Activated CD4-positive, alpha-beta T cell treated with anti-CD3 and anti-CD28 coated beads for 36 hours (primary cell): ENCODE measurements at regions of chr2 and their contacts with region 1.

Region 1: GRCh38 chr2:10302479-10303180 is at the start of gene HPCAL1:
- DNase-seq: peak; percentile 91
- ATAC-seq: peak; percentile 72
- H3K4me3 Mint-ChIP-seq: peak within 1 kb of the TSS; percentile 100
- H3K27ac Mint-ChIP-seq: peak within 1 kb of the TSS; percentile 89
- H3K4me1 Mint-ChIP-seq: peaks cover 65% of the 10 kb centered on the region
- H3K27me3 Mint-ChIP-seq: no peaks in the 10 kb centered on the region
- total RNA-seq, gene HPCAL1: 109 to 114 TPM

Region 2: DNA sequence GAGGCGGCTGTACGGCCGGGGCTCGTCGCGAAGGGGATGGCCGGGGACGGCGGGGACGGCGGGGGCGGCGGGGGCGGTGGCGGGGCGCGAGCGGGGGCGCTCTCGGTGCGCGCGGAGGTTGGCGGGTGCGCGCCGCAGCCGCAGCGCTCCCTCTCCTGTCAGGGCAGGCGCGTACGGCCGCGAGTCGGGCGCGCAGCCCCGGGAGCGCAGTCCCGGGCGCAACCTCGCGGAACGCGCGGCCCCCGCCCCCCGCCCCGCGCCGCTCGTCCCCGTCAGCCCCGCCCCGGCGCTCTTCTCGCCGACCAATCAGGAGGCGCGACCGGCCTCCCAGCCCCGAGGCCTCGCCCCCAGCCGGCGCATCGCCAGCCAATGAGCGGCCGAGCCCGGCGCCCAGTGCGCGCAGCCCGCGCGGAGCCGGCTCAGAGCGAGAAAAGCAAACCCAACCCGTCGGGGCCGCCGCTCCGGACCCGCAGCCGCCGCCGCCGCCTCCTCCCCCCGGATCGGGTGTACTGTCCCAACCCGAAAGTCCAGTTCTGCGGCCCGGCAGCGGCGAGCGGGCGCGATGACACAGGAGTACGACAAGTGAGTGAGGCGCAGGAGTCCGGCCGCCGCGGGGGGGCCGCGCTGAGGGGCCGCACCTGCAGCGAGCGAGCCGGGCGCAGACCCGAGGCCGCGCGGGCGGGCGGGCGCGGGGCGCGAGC is 351.2 kb before region 1 on chr2 and contains the start of gene GRHL1:
- CTCF ChIA-PET with region 1: no interaction called
- POLR2A ChIA-PET with region 1: no interaction called
- intact Hi-C with region 1: loop called in 1 of 2 experiments (anchors 5 kb)
- DNase-seq: peak; percentile 95
- ATAC-seq: peak; percentile 98
- H3K4me3 Mint-ChIP-seq: peak within 1 kb of the TSS; percentile 68
- H3K27ac Mint-ChIP-seq: no peak within 1 kb of the TSS
- H3K4me1 Mint-ChIP-seq: peaks cover 4% of the 10 kb centered on the region
- H3K27me3 Mint-ChIP-seq: peaks cover 39% of the 10 kb centered on the region
- total RNA-seq, gene GRHL1: 0.27 to 0.53 TPM

Region 3: DNA sequence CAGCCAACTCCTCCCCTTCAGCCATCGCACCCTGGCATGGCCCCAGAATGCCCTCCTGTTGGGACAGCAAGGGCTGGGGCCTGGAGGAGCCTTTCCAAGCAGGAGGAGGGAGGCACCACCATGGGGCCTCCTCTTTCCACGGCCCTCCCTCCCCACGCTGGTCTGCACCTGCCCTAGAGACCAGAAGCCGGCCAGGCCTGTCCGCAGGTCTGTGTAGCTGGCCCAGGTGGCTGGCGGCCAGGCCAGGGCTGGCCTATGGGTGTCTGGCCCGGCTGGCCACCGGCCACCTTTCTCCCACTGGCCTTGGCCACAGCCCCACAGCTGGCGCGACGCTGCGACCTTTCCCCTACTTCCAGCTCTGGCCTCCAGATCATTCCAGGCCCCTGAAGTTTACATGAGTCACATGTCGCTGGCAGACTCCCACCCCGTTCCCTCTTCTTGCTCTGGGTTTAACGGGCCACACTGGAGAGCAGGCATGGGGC is 292.8 kb before region 1 on chr2:
- CTCF ChIA-PET with region 1: no interaction called
- POLR2A ChIA-PET with region 1: no interaction called
- intact Hi-C with region 1: no loop called
- DNase-seq: no peak
- ATAC-seq: no peak
- H3K4me3 Mint-ChIP-seq: no peak overlapping the region
- H3K27ac Mint-ChIP-seq: no peak overlapping the region
- H3K4me1 Mint-ChIP-seq: no peaks in the 10 kb centered on the region
- H3K27me3 Mint-ChIP-seq: peaks cover 9% of the 10 kb centered on the region

Region 4: GRCh38 chr2:10028988-10029874 is 273.4 kb before region 1 on chr2:
- CTCF ChIA-PET with region 1: no interaction called
- POLR2A ChIA-PET with region 1: no interaction called
- intact Hi-C with region 1: no loop called
- DNase-seq: peak; percentile 41
- ATAC-seq: peak; percentile 78
- H3K4me3 Mint-ChIP-seq: no peak overlapping the region
- H3K27ac Mint-ChIP-seq: no peak overlapping the region
- H3K4me1 Mint-ChIP-seq: peaks cover 14% of the 10 kb centered on the region
- H3K27me3 Mint-ChIP-seq: no peaks in the 10 kb centered on the region

Region 5: GRCh38 chr2:10382354-10383061 is 79.9 kb after region 1 on chr2:
- CTCF ChIA-PET with region 1: interaction called, 3 read pairs
- POLR2A ChIA-PET with region 1: interaction called, 5 read pairs
- intact Hi-C with region 1: loop called in 1 of 2 experiments (anchors 5 kb)
- DNase-seq: peak; percentile 46
- ATAC-seq: peak; percentile 68
- H3K4me3 Mint-ChIP-seq: peak overlapping the region; percentile 15
- H3K27ac Mint-ChIP-seq: peak overlapping the region; percentile 69
- H3K4me1 Mint-ChIP-seq: peaks cover 91% of the 10 kb centered on the region
- H3K27me3 Mint-ChIP-seq: no peaks in the 10 kb centered on the region

Region 6: GRCh38 chr2:10424051-10424450 is 121.4 kb after region 1 on chr2:
- CTCF ChIA-PET with region 1: no interaction called
- POLR2A ChIA-PET with region 1: no interaction called
- intact Hi-C with region 1: no loop called
- DNase-seq: no peak
- ATAC-seq: no peak
- H3K4me3 Mint-ChIP-seq: no peak overlapping the region
- H3K27ac Mint-ChIP-seq: no peak overlapping the region
- H3K4me1 Mint-ChIP-seq: no peaks in the 10 kb centered on the region
- H3K27me3 Mint-ChIP-seq: no peaks in the 10 kb centered on the region

Region 7: DNA sequence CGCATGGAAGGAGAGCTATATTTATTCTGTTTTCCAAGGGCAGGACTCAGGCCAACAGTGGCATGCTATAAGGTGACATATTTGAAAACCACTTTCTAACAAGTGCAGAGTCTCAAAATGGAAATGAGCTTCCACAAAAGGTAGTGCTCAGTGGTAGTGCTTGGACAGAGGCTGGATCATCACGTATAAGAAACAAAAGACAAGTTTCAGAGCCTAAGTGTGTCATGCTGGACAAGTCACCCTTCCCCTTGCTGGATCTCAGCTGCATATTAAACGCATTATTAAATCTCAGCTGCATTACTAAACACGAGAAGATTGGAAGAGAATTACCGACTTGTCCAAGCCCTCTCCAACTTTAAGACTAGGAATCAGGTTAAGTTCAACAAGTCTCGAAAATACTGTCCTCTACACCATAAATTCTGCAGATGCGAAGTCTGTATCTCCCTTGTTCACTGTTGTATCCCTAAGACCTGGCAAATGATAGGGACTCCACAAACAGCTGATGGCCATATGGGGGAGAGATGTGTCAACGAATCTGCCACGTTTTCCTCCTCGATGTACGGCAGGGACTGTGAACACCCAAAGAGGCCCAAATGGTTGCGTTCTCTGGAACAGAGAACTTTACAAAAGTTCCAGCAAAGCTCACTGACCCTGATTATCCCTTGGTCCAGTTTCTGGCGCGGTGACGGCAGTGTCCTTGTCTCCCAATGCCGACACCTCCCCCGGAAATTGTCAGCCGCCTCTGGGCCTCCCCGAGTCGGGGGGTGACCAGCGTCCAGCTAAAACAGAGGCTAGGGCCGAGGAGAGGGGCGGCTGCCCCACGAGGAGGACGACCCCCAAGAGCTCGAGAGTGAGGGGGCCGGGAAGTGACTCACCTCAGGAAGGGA is 386.5 kb after region 1 on chr2:
- CTCF ChIA-PET with region 1: no interaction called
- POLR2A ChIA-PET with region 1: no interaction called
- intact Hi-C with region 1: loop called in 1 of 2 experiments (anchors 10 kb)
- DNase-seq: no peak
- ATAC-seq: peak; percentile 19
- H3K4me3 Mint-ChIP-seq: no peak overlapping the region
- H3K27ac Mint-ChIP-seq: no peak overlapping the region
- H3K4me1 Mint-ChIP-seq: peaks cover 7% of the 10 kb centered on the region
- H3K27me3 Mint-ChIP-seq: no peaks in the 10 kb centered on the region

Region 8: GRCh38 chr2:11154923-11155380 is 852.3 kb after region 1 on chr2:
- CTCF ChIA-PET with region 1: no interaction called
- POLR2A ChIA-PET with region 1: no interaction called
- intact Hi-C with region 1: loop called in 1 of 2 experiments (anchors 5 kb)
- DNase-seq: peak; percentile 100
- ATAC-seq: peak; percentile 95
- H3K4me3 Mint-ChIP-seq: peak overlapping the region; percentile 73
- H3K27ac Mint-ChIP-seq: peak overlapping the region; percentile 83
- H3K4me1 Mint-ChIP-seq: peaks cover 15% of the 10 kb centered on the region
- H3K27me3 Mint-ChIP-seq: no peaks in the 10 kb centered on the region